HCT116 (cell line): ENCODE measurements at regions of chr2 and their contacts with region 1.

Region 1: DNA sequence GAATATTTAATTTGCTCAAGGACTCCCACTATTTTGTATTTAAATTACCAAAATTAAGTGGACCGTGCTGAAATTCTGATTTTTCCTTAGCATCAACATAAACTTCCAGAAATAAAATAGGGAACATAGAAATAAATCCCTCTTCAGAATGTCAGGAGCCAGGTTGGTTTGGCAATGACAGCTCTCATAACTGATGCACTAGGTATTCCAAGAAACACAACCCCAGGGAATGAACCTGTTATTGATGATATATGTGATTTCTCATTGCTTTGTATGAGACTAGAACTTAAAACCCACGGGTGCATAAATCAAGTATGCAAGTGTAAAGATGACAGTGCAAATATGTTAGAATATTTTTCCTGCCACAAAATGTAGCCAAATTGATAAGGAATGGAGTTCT is 12.8 kb downstream of the SLC5A7 start:
- DNase-seq: no peak
- ATAC-seq: no peak
- H3K4me3 ChIP-seq: no peak overlapping the region
- H3K27ac ChIP-seq: no peak overlapping the region
- H3K4me1 ChIP-seq: no peaks in the 10 kb centered on the region
- H3K27me3 ChIP-seq: no peaks in the 10 kb centered on the region
- CTCF ChIP-seq: no peak
- POLR2A ChIP-seq: no peak
- RAD21 ChIP-seq: no peak

Region 2: DNA sequence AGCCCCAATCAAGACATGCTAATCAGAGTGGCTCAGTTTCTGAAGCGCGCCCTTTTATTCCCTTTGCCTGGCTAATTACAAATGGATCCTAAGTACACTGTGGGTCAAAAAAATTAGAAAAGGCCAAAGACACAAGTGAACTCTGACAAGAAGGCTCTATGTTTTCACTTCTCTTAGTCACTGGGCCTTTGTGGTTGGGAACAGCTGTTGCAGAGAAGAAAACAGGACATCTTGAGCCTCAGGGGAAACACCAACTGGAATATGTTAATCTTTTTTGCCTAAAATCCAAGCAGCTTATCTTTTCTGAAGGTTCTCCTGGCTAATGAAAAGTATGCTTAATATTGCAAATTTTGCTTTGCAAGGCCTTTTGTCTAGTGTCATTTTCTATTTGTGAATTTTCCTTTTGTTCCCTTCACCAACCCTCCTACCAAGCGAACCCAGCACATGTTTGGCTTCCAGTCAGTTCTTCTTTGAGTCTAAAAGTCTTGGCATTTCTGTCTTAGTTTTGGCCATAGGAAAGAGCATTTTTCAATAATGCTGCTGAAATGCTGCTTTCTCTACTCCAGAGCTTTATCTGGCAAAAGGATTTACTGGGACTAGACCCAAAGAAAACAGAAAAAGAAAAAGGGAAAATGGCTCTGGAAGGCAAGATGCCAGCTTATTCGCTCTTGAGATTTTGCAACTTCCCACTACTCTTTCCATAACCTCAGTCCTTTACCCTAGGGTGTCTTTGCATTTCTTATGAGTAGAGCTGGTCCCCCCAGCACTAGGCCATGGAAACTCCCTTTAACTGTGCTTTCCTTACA is 673.0 kb before region 1 on chr2:
- CTCF ChIA-PET with region 1: no interaction called
- POLR2A ChIA-PET with region 1: no interaction called
- RAD21 ChIA-PET with region 1: no interaction called
- intact Hi-C with region 1: no loop called
- DNase-seq: no peak
- ATAC-seq: no peak
- H3K4me3 ChIP-seq: no peak overlapping the region
- H3K27ac ChIP-seq: no peak overlapping the region
- H3K4me1 ChIP-seq: no peaks in the 10 kb centered on the region
- H3K27me3 ChIP-seq: no peaks in the 10 kb centered on the region
- CTCF ChIP-seq: no peak
- POLR2A ChIP-seq: no peak
- RAD21 ChIP-seq: no peak

Region 3: DNA sequence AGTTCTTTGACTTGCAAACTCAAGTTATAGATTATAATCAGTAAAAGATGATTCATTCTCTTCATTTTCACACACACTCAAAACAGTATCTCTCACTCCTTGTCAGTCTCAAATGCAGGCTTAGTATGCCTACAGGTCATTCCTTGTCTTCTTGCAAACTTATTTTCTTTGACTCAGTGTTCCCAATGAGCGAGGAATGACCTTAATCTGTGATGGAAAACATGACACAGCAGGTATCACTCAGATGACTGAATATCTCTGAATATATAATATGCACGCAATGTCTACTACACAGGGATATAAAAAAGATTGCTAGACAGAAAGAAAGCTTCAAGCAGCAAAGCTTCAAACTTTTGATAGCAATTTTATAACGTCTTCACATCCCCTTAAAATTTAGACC is 300.3 kb before region 1 on chr2:
- CTCF ChIA-PET with region 1: no interaction called
- POLR2A ChIA-PET with region 1: no interaction called
- RAD21 ChIA-PET with region 1: no interaction called
- intact Hi-C with region 1: no loop called
- DNase-seq: no peak
- ATAC-seq: no peak
- H3K4me3 ChIP-seq: no peak overlapping the region
- H3K27ac ChIP-seq: no peak overlapping the region
- H3K4me1 ChIP-seq: no peaks in the 10 kb centered on the region
- H3K27me3 ChIP-seq: no peaks in the 10 kb centered on the region
- CTCF ChIP-seq: no peak
- POLR2A ChIP-seq: no peak
- RAD21 ChIP-seq: no peak

Region 4: GRCh38 chr2:108058576-108059137 is 59.5 kb after region 1 on chr2:
- CTCF ChIA-PET with region 1: no interaction called
- POLR2A ChIA-PET with region 1: no interaction called
- RAD21 ChIA-PET with region 1: no interaction called
- intact Hi-C with region 1: loop called (anchors 10 kb)
- DNase-seq: no peak
- ATAC-seq: no peak
- H3K4me3 ChIP-seq: no peak overlapping the region
- H3K27ac ChIP-seq: no peak overlapping the region
- H3K4me1 ChIP-seq: no peaks in the 10 kb centered on the region
- H3K27me3 ChIP-seq: no peaks in the 10 kb centered on the region
- CTCF ChIP-seq: no peak
- POLR2A ChIP-seq: no peak
- RAD21 ChIP-seq: no peak